MCF 10A (cell line): ENCODE measurements at regions of chr21 and their contacts with region 1.

Region 1: GRCh38 chr21:40385892-40386599 is 460.9 kb downstream of the DSCAM start:
- DNase-seq: peak; percentile 38
- H3K4me3 Mint-ChIP-seq: no peak overlapping the region
- H3K27ac Mint-ChIP-seq: no peak overlapping the region
- H3K4me1 Mint-ChIP-seq: no peaks in the 10 kb centered on the region
- H3K27me3 Mint-ChIP-seq: no peaks in the 10 kb centered on the region
- CTCF ChIP-seq: peak; percentile 80

Region 2: GRCh38 chr21:39788383-39788782 is 597.7 kb before region 1 on chr21:
- CTCF ChIA-PET with region 1: no interaction called
- POLR2A ChIA-PET with region 1: no interaction called
- intact Hi-C with region 1: loop called (anchors 5 kb)
- DNase-seq: peak; percentile 40
- H3K4me3 Mint-ChIP-seq: peak overlapping the region; percentile 41
- H3K27ac Mint-ChIP-seq: no peak overlapping the region
- H3K4me1 Mint-ChIP-seq: no peaks in the 10 kb centered on the region
- H3K27me3 Mint-ChIP-seq: no peaks in the 10 kb centered on the region
- CTCF ChIP-seq: peak; percentile 81

Region 3: GRCh38 chr21:40143822-40144525 is 242.1 kb before region 1 on chr21:
- CTCF ChIA-PET with region 1: interaction called, 24 read pairs
- POLR2A ChIA-PET with region 1: no interaction called
- intact Hi-C with region 1: loop called (anchors 1 kb)
- DNase-seq: peak; percentile 40
- H3K4me3 Mint-ChIP-seq: no peak overlapping the region
- H3K27ac Mint-ChIP-seq: no peak overlapping the region
- H3K4me1 Mint-ChIP-seq: no peaks in the 10 kb centered on the region
- H3K27me3 Mint-ChIP-seq: no peaks in the 10 kb centered on the region
- CTCF ChIP-seq: peak; percentile 60

Region 4: GRCh38 chr21:40404396-40404800 is 18.4 kb after region 1 on chr21:
- CTCF ChIA-PET with region 1: interaction called, 14 read pairs
- POLR2A ChIA-PET with region 1: no interaction called
- intact Hi-C with region 1: no loop called
- DNase-seq: no peak
- H3K4me3 Mint-ChIP-seq: no peak overlapping the region
- H3K27ac Mint-ChIP-seq: no peak overlapping the region
- H3K4me1 Mint-ChIP-seq: no peaks in the 10 kb centered on the region
- H3K27me3 Mint-ChIP-seq: no peaks in the 10 kb centered on the region
- CTCF ChIP-seq: no peak